ENCODE measurements at regions of chr12 and their contacts with region 1.

Region 1: DNA sequence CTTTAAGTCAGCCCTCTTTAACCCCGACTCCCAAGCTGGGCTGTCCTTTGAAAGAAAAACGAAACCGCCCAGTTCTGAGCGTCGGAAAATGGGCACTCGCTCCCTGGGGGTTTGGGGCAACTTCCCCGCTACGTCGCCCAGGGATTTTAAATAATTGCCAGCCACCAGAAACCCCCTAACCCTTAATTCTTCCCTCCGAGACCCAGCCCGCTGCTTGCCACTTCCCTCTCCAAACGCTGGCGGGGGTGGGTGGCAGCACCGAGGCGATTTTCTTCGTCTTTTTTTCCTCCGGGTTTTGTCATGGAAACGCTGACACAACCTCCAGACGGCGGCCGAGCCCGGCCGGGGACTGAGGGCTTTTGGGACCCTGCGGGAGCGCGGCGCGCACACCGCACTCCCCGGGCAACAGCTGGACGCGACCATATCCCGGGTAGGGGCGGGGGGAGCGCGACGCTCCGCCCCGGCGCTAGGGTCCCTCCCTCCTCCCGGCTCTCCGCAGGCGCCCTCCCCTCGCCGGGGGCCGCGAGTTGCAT is at the start of gene CHST11:
- DNase-seq: peak; percentile 62 to 82 (median 67)
- H3K4me3 ChIP-seq: peak within 1 kb of the TSS; percentile 94
- H3K4me3 Mint-ChIP-seq: peak within 1 kb of the TSS; percentile 92 to 100 (median 97)
- H3K27ac ChIP-seq: peak within 1 kb of the TSS; percentile 83
- H3K27ac Mint-ChIP-seq: peak within 1 kb of the TSS; percentile 86 to 99 (median 96)
- H3K4me1 ChIP-seq: peaks cover 27% of the 10 kb centered on the region
- H3K4me1 Mint-ChIP-seq: peaks cover 36 to 49% (median 44%) of the 10 kb centered on the region in 3 donors
- H3K27me3 ChIP-seq: no peaks in the 10 kb centered on the region
- H3K27me3 Mint-ChIP-seq: no peaks in the 10 kb centered on the region
- total RNA-seq, gene CHST11: 47.8 to 51.5 TPM

Region 2: GRCh38 chr12:104473374-104473983 is 17.0 kb after region 1 on chr12:
- CTCF ChIA-PET with region 1: interaction called, 23 read pairs
- POLR2A ChIA-PET with region 1: interaction called, 18 read pairs
- DNase-seq: no peak
- H3K4me3 ChIP-seq: peak overlapping the region; percentile 21
- H3K4me3 Mint-ChIP-seq: peak overlapping the region; percentile 48 to 91 (median 76)
- H3K27ac ChIP-seq: no peak overlapping the region
- H3K27ac Mint-ChIP-seq: peak overlapping the region; percentile 85 to 98 (median 91)
- H3K4me1 ChIP-seq: peaks cover 84% of the 10 kb centered on the region
- H3K4me1 Mint-ChIP-seq: peaks cover 83 to 93% (median 90%) of the 10 kb centered on the region in 3 donors
- H3K27me3 ChIP-seq: no peaks in the 10 kb centered on the region
- H3K27me3 Mint-ChIP-seq: no peaks in the 10 kb centered on the region

Region 3: GRCh38 chr12:104485651-104486362 is 29.3 kb after region 1 on chr12:
- CTCF ChIA-PET with region 1: interaction called, 11 read pairs
- POLR2A ChIA-PET with region 1: interaction called, 3 read pairs
- DNase-seq: peak; percentile 26 to 74 (median 47)
- H3K4me3 ChIP-seq: peak overlapping the region; percentile 38
- H3K4me3 Mint-ChIP-seq: peak overlapping the region; percentile 23 to 78 (median 75)
- H3K27ac ChIP-seq: peak overlapping the region; percentile 40
- H3K27ac Mint-ChIP-seq: peak overlapping the region; percentile 59 to 93 (median 90)
- H3K4me1 ChIP-seq: peaks cover 83% of the 10 kb centered on the region
- H3K4me1 Mint-ChIP-seq: peaks cover 90 to 97% (median 96%) of the 10 kb centered on the region in 3 donors
- H3K27me3 ChIP-seq: no peaks in the 10 kb centered on the region
- H3K27me3 Mint-ChIP-seq: peaks cover 0 to 2% of the 10 kb centered on the region in 2 donors

Region 4: GRCh38 chr12:104501660-104502059 is 45.2 kb after region 1 on chr12:
- CTCF ChIA-PET with region 1: interaction called, 11 read pairs
- POLR2A ChIA-PET with region 1: interaction called, 7 read pairs
- DNase-seq: no peak
- H3K4me3 ChIP-seq: no peak overlapping the region
- H3K4me3 Mint-ChIP-seq: peak overlapping the region in 3 of 7 donors; percentile 14 to 49 (median 46)
- H3K27ac ChIP-seq: no peak overlapping the region
- H3K27ac Mint-ChIP-seq: peak overlapping the region in 5 of 8 donors; percentile 25 to 96 (median 66)
- H3K4me1 ChIP-seq: peaks cover 75% of the 10 kb centered on the region
- H3K4me1 Mint-ChIP-seq: peaks cover 90 to 99% (median 97%) of the 10 kb centered on the region in 3 donors
- H3K27me3 ChIP-seq: no peaks in the 10 kb centered on the region
- H3K27me3 Mint-ChIP-seq: no peaks in the 10 kb centered on the region